WTC11 (cell line): ENCODE measurements at regions of chr3 and their contacts with region 1.

Region 1: DNA sequence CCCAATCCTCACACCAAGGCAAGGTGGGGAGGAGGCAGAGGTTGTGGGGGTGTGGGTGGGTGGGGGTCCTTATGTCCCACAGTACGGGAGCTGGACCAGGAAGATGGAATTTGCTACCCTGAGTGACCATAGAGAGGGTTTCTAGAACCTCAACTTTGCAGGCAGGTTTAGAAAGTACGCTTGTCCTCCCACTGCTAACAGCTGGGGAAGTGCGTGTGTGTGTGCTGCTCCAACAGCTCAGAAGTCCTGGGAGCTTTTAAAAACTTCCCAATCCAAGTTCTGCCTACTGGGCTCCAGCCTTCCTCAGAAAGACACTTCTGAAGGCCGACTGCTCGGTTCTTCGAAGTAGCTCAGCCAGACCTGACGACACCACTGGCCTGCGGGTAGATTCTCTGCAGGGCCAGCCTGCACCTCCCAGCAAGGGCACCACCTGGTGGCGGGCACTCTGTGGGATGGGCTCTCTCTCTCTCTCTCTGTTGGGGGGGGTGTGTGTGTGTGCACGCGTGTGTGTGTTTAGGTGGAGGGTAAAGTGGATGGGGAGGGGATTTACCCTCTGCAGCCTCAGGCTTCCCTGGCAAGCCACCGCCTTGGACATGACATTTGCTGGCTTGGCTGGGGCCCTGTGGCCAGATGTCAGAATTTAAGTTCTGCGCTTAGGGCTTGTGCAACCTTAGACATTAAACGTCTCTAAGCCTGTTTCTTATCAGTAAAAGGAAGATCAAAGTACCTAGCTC is 15.6 kb downstream of the TMEM158 start:
- DNase-seq: peak; percentile 88
- ATAC-seq: peak; percentile 90
- H3K4me3 Mint-ChIP-seq: no peak overlapping the region
- H3K27ac Mint-ChIP-seq: no peak overlapping the region
- H3K4me1 Mint-ChIP-seq: peaks cover 7% of the 10 kb centered on the region
- H3K27me3 Mint-ChIP-seq: peaks cover 2% of the 10 kb centered on the region
- CTCF ChIP-seq: peak; percentile 39; the same call in 1 of the 2 replicates

Region 2: GRCh38 chr3:45043728-45044299 is 166.7 kb before region 1 on chr3:
- CTCF ChIA-PET with region 1: interaction called, 113 read pairs
- POLR2A ChIA-PET with region 1: interaction called, 3 read pairs
- DNase-seq: no peak
- ATAC-seq: no peak
- H3K4me3 Mint-ChIP-seq: no peak overlapping the region
- H3K27ac Mint-ChIP-seq: no peak overlapping the region
- H3K4me1 Mint-ChIP-seq: peaks cover 6% of the 10 kb centered on the region
- H3K27me3 Mint-ChIP-seq: peaks cover 4% of the 10 kb centered on the region
- CTCF ChIP-seq: no peak

Region 3: GRCh38 chr3:45078910-45079522 is 131.5 kb before region 1 on chr3:
- CTCF ChIA-PET with region 1: interaction called, 13 read pairs
- POLR2A ChIA-PET with region 1: no interaction called
- DNase-seq: no peak
- ATAC-seq: no peak; the same call in 1 of the 2 replicates
- H3K4me3 Mint-ChIP-seq: no peak overlapping the region
- H3K27ac Mint-ChIP-seq: no peak overlapping the region; the same call in 1 of the 2 replicates
- H3K4me1 Mint-ChIP-seq: peaks cover 2% of the 10 kb centered on the region; the same call in 1 of the 2 replicates
- H3K27me3 Mint-ChIP-seq: no peaks in the 10 kb centered on the region
- CTCF ChIP-seq: no peak

Region 4: DNA sequence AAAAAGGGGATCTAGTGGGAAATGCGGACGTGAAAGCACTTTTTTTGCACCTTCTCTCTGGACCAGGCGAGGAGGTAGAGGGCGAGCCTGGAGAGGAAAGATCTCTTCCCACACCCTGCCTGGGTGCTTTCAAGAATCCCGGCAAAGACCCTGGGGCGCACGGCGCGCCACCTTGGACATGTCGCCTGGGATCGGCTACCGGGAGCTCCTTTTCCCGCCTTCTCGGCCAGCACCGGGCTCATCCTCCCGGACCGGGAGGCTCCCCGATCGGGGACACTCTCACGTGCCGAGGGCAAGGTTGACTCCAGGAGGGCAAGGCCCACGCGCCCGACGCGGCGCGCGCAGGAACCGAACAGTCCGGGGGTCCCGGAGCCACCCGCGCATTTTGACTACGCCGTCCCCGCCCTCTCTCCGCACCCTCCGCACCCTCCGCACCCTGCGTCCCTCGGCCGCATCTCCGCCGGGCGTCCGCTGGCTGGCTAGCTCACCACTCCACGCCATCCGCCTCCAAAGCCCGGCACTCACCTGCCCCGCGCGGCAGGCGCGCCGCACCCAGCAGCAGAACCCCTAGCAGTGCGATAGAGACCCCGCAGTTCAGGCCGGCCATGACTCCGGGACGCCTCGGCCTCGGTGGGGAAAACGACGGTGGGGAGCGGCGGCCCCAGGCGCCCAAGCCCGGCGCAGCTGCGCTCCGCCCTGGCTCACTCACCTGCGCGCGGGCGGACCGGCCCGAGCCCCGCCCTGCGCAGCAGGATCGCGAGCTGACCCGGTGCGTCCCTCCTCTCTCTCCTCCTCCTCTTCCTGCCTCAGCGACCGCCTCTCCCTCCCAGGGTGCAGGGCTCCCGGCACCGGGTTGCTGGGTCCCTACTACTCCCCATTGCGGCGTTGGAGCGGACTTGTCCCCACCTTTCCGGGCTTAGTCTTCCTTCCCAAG is 64.5 kb before region 1 on chr3 and contains the start of gene CDCP1:
- CTCF ChIA-PET with region 1: interaction called, 15 read pairs
- POLR2A ChIA-PET with region 1: no interaction called
- DNase-seq: peak; percentile 57
- ATAC-seq: peak; percentile 95
- H3K4me3 Mint-ChIP-seq: peak within 1 kb of the TSS; percentile 92
- H3K27ac Mint-ChIP-seq: 0 out of 2 replicates have a peak within 1 kb of the TSS, but pooled peaks have one; percentile 61
- H3K4me1 Mint-ChIP-seq: peaks cover 24% of the 10 kb centered on the region
- H3K27me3 Mint-ChIP-seq: peaks cover 56% of the 10 kb centered on the region
- CTCF ChIP-seq: no peak
- total RNA-seq, gene CDCP1: 13.4 to 14.6 TPM (median 13.5 TPM) in 3 replicates

Region 5: DNA sequence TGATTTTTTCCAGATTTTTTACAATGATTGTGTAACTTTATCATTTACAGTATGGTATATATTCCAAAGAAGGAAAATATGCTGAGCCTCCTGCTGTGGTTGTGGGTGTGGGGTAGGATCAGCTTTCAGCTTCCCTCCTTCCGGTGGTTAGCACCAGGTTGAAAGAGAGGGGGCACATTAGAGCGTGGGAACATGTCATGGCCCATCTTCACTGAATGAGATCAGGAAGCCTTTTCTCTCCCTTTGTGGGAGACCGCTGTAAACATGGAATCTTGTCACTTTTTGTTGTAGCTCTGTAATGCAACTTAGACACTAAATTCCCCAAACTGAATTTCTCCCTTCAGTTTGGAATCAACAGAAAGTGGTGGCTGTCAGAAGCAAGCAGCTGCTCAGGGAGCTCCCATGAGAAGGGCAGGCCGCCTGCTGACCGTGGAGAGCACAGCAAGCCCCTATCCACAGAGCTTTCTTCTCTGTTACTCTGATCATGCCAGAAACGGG is 297.4 kb after region 1 on chr3:
- CTCF ChIA-PET with region 1: interaction called, 16 read pairs
- POLR2A ChIA-PET with region 1: no interaction called
- DNase-seq: peak; percentile 60
- ATAC-seq: peak; percentile 66
- H3K4me3 Mint-ChIP-seq: no peak overlapping the region
- H3K27ac Mint-ChIP-seq: no peak overlapping the region
- H3K4me1 Mint-ChIP-seq: 0 out of 2 replicates have a peak, but pooled peaks cover 3% of the 10 kb centered on the region
- H3K27me3 Mint-ChIP-seq: no peaks in the 10 kb centered on the region
- CTCF ChIP-seq: 0 out of 2 replicates have a peak, but pooled peaks have one; percentile 13